ENCODE measurements at regions of chr15 and their contacts with region 1.

Region 1: DNA sequence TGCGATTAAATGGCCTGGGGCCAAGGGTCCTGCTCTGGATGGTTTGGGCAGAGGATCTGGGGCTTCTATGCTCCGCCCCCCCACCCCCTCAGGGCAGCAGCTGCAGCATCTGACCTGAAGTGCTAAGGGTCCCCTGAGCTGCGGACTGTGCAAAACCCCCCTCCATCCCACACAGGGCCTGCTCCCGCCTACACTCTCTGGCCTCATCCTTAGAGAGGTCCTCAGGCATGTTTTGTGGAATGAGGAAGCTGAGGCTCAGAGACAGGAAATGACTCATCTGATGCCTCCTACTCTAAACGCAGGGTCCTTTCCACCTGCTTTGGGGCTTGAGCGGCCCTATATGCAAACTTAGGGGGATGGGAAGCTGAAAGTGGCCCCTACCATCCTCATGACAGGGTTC is 59.5 kb upstream of the CTSH start:
- DNase-seq: no peak

Region 2: GRCh38 chr15:78506971-78507830 is 497.1 kb before region 1 on chr15 and contains the start of gene HYKK:
- intact Hi-C with region 1: loop called in 1 of 2 experiments (anchors 5 kb)
- DNase-seq: peak; percentile 95
- total RNA-seq, gene HYKK: 4.2 to 4.3 TPM